ENCODE measurements at regions of chr6 and their contacts with region 1.

Region 1: DNA sequence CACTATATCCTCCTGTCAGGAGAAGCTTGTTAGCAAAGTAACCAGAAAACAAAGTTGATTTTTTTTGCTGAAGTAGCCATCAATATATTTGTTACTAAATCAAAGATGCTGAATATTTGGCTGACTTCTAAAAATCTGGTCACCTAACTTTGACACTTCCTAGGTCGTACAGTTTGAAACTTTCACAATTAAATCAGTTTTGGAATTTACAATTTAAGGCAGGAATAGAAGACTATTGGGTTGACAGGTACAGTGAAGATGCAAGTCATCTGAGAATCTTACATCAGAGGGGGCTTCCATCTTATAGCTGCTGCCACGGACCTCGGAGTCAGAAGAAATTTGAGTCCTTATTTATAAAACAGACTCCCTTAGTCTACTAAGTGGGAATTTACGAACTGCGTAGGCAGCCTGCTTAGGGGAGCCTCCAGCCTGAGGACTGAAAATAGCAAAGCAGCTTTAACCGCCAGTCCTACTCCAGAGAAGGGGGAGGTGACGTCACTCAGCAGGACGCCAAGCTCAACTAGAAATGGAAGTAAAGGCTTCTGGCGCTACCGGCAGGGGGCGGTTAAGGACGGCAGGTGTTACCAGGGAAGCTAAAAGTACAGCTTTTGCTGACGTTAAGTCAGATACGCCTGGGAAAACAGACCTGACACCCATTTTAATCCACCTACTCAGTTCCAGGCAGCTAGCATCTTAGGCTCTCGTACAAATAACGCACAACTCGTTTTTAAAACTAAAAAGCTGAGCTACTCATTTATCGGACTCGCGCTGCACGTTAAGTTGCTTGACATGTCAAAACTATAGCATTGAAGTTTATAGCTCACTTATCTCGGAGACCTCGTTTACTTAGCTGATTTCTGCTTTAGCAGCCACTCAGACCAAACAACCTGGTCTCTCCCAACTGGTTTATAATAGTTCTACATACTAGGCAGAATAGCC is 61.1 kb upstream of the HFE start:
- DNase-seq: peak; percentile 97
- ATAC-seq: peak; percentile 42
- H3K4me3 Mint-ChIP-seq: peak overlapping the region; percentile 86
- H3K27ac Mint-ChIP-seq: peak overlapping the region; percentile 99
- H3K4me1 Mint-ChIP-seq: peaks cover 86% of the 10 kb centered on the region
- H3K27me3 Mint-ChIP-seq: peaks cover 3% of the 10 kb centered on the region

Region 2: DNA sequence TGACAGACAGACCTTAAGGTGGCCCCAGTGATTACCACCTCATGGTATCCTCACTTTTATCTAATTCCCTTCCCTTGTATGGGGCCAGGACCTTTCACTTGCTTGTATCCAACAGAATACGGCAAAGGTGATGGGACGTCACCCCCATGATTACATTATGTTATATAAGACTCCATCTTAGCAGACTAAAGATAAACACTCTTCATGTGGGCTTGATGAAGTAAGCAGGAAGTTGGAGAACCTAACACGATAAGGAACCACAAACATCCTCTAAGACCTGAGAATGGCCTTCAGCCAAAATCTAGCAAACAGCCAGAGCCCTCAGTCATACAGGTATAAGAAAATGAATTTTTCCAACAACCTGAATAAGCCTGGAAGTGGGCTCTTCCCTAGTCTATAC is 160.2 kb before region 1 on chr6:
- CTCF ChIA-PET with region 1: no interaction called
- POLR2A ChIA-PET with region 1: no interaction called
- DNase-seq: peak; percentile 47
- ATAC-seq: peak; percentile 91
- H3K4me3 Mint-ChIP-seq: peak overlapping the region; percentile 23
- H3K27ac Mint-ChIP-seq: peak overlapping the region; percentile 68
- H3K4me1 Mint-ChIP-seq: peaks cover 20% of the 10 kb centered on the region
- H3K27me3 Mint-ChIP-seq: peaks cover 2% of the 10 kb centered on the region

Region 3: DNA sequence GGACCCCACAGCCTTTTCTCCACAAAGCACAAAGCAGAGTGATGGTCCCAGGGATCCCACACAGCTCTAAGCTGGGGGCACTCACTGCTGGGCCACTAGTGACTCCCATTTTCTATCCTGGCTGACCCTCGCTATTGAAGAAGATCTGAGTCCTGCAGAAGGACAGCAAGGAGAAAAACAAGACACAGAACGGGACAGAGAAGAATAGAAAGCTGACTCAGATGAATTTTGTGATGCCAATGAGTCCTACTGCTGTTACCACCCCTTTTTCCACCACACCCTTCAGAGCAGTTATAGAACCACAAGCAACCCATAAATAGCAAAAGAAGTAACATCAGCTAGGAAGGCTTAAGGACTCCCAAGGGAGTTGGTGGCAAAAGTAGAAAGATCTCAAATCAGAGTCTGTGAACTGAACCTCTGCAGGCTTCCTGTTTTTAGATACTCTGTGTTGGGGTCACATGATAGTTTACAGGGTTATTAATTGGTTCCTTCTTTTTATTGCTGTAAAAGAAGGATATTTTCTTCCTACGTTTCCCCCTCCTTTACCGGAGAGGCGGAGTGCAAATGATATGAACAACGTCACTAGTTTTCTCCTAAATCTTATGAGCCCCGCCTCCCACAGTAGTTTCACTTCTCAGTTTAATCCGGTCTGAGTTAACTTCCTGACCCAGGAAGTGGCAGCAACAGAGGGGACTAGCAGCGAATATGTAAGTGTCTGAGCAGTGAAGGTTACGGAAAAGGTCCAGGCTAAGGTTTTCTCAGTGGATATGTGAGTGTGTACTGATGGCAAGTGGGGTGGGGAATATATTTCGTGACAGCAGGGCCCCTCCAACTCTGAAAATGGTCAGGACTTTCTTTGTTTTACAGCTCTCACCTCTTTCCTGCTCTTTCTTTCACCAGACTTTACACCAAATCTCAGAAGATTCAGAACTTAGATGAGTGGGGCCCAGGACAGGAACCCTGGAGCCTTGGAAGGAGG is 63.7 kb before region 1 on chr6 and contains the start of gene TRIM38:
- CTCF ChIA-PET with region 1: no interaction called
- POLR2A ChIA-PET with region 1: interaction called, 39 read pairs
- DNase-seq: peak; percentile 91
- ATAC-seq: peak; percentile 90
- H3K4me3 Mint-ChIP-seq: peak within 1 kb of the TSS; percentile 99
- H3K27ac Mint-ChIP-seq: peak within 1 kb of the TSS; percentile 100
- H3K4me1 Mint-ChIP-seq: peaks cover 65% of the 10 kb centered on the region
- H3K27me3 Mint-ChIP-seq: no peaks in the 10 kb centered on the region
- total RNA-seq, gene TRIM38: 19.1 to 19.5 TPM

Region 4: DNA sequence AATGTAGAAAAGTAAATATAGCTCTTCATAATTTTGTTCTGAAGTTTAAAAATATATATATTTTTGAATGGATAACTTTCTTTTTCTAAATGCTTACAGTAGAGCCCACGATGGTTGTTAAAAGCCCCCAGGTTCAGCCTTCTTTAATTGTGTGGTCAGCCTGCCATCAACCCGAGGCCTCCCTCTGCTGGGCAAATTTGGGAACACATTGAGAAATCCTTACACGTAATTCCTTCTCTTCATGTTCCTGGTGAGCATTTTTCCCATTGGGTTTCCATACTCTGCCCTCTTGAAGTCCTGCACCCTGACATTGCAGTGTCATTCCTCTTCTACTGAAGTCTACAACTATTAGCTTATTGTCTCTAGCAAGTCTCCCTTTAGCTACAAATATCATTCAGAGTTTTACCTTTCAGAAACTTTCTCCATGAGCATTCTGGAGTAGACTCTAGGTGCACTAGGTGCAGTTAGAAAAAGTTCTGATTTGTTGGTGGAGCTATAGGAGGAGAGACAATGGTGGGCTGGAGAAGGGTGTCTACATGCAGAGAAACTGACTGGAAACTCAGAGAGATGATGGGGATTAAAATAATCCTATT is 23.0 kb before region 1 on chr6:
- CTCF ChIA-PET with region 1: interaction called, 139 read pairs
- POLR2A ChIA-PET with region 1: interaction called, 47 read pairs
- DNase-seq: peak; percentile 61
- ATAC-seq: peak; percentile 44
- H3K4me3 Mint-ChIP-seq: no peak overlapping the region
- H3K27ac Mint-ChIP-seq: no peak overlapping the region
- H3K4me1 Mint-ChIP-seq: peaks cover 8% of the 10 kb centered on the region
- H3K27me3 Mint-ChIP-seq: no peaks in the 10 kb centered on the region

Region 5: DNA sequence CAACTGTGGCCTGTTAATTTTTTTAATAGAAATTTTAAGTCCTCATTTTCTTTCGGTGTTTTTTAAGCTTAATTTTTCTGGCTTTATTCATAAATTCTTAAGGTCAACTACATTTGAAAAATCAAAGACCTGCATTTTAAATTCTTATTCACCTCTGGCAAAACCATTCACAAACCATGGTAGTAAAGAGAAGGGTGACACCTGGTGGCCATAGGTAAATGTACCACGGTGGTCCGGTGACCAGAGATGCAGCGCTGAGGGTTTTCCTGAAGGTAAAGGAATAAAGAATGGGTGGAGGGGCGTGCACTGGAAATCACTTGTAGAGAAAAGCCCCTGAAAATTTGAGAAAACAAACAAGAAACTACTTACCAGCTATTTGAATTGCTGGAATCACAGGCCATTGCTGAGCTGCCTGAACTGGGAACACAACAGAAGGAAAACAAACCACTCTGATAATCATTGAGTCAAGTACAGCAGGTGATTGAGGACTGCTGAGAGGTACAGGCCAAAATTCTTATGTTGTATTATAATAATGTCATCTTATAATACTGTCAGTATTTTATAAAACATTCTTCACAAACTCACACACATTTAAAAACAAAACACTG is 71.2 kb after region 1 on chr6:
- CTCF ChIA-PET with region 1: interaction called, 18 read pairs
- POLR2A ChIA-PET with region 1: interaction called, 70 read pairs
- DNase-seq: peak; percentile 78
- ATAC-seq: peak; percentile 85
- H3K4me3 Mint-ChIP-seq: no peak overlapping the region
- H3K27ac Mint-ChIP-seq: no peak overlapping the region
- H3K4me1 Mint-ChIP-seq: peaks cover 16% of the 10 kb centered on the region
- H3K27me3 Mint-ChIP-seq: peaks cover 9% of the 10 kb centered on the region

Region 6: GRCh38 chr6:26183581-26184366 is 157.6 kb after region 1 on chr6:
- CTCF ChIA-PET with region 1: no interaction called
- POLR2A ChIA-PET with region 1: interaction called, 46 read pairs
- DNase-seq: peak; percentile 80
- ATAC-seq: peak; percentile 80
- H3K4me3 Mint-ChIP-seq: peak overlapping the region; percentile 83
- H3K27ac Mint-ChIP-seq: peak overlapping the region; percentile 97
- H3K4me1 Mint-ChIP-seq: peaks cover 79% of the 10 kb centered on the region
- H3K27me3 Mint-ChIP-seq: no peaks in the 10 kb centered on the region

Region 7: DNA sequence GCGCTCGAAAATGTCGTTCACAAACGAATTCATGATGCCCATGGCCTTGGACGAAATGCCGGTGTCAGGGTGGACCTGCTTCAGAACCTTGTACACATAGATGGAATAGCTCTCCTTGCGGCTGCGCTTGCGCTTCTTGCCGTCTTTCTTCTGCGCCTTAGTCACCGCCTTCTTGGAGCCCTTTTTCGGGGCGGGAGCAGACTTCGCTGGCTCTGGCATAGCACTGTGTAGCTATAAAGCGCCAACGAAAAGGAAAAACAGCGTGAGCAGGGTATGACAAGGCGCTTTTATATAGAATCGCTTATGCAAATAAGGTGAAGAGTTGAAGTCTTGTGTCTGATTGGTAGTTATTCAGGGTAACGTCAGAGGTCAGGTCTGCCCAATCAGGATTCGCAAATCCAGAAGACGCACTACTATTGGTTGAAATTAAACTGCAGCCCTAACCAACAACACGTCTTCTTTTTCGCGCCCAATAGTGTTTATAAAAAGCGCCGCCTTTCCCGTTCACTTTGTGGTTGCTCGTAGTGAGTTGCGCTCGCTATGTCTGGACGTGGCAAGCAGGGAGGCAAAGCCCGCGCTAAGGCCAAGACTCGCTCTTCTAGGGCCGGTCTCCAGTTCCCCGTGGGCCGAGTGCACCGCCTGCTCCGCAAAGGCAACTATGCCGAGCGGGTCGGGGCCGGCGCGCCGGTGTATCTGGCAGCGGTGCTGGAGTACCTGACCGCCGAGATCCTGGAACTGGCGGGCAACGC is 1106.5 kb after region 1 on chr6:
- CTCF ChIA-PET with region 1: no interaction called
- POLR2A ChIA-PET with region 1: interaction called, 68 read pairs
- DNase-seq: peak; percentile 95
- ATAC-seq: peak; percentile 76
- H3K4me3 Mint-ChIP-seq: no peak overlapping the region
- H3K27ac Mint-ChIP-seq: no peak overlapping the region
- H3K4me1 Mint-ChIP-seq: peaks cover 68% of the 10 kb centered on the region
- H3K27me3 Mint-ChIP-seq: no peaks in the 10 kb centered on the region

Measured in activated CD8-positive, alpha-beta T cell treated with anti-CD3 and anti-CD28 coated beads, Interleukin-2, amount 10 ng/mL, durations not matched to agents 7 days and 5 days (primary cell).